ENCODE measurements at regions of chr12 and their contacts with region 1.

Region 1: DNA sequence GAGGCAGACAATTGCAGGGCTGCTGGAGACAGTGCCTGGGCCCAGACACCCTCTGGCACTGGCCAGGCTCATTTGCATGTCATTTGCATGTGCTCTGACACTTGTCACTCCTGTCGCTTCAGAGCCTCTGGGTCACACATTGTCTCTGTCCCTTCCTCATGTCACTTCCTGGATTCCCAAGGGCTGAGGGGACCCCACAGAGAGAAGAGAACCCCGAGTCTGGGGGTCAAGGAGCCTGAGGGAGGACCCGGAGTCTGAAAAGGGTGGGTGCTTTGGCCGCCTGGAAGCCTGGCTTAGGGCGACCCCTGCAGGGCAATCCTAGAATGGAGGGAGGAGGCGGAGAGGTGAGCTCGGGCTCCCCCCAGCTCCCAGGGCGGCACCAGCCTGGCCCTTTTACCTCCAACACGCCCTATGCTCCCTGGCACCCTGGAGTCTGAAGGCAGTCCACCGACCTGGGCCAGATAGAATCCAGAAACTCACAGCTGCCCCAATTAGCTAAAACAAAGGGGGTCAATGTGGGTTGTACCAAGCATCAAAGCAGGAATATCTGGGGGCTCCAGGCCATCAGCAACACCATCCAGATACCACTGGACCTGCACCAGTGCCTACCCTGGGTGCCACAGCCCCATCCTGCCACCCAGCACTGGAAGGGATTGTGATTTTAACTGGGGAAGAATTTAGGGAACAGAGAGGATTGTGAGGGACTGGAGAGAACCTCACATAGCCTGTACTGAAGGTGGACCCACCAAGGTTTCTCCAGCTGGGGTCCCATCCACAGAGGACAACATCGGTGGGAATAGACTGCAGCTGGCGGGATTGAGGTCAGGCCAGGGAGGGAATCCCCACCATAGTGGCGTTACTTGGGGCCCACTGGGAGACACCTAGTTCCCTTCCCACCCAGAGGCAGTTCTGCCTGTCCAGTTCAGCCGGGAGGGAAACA is 21.8 kb upstream of the KRT78 start:
- DNase-seq: peak; percentile 78
- H3K4me3 Mint-ChIP-seq: no peak overlapping the region
- H3K27ac Mint-ChIP-seq: no peak overlapping the region
- H3K4me1 Mint-ChIP-seq: peaks cover 43% of the 10 kb centered on the region
- H3K27me3 Mint-ChIP-seq: no peaks in the 10 kb centered on the region

Region 2: GRCh38 chr12:53005986-53006809 is 135.6 kb after region 1 on chr12 and contains the start of gene EIF4B:
- CTCF ChIA-PET with region 1: interaction called, 9 read pairs
- POLR2A ChIA-PET with region 1: interaction called, 10 read pairs
- DNase-seq: peak; percentile 100
- H3K4me3 Mint-ChIP-seq: peak within 1 kb of the TSS; percentile 97
- H3K27ac Mint-ChIP-seq: peak within 1 kb of the TSS; percentile 96
- H3K4me1 Mint-ChIP-seq: peaks cover 49% of the 10 kb centered on the region
- H3K27me3 Mint-ChIP-seq: peaks cover under 1% of the 10 kb centered on the region
- total RNA-seq, gene EIF4B: 303 to 311 TPM